Endothelial cell of umbilical vein (primary cell): ENCODE measurements at regions of chr7 and their contacts with region 1.

Region 1: GRCh38 chr7:92621026-92621540 is 30.9 kb upstream of the FAM133B start:
- DNase-seq: peak; percentile 90
- H3K4me3 ChIP-seq: no peak overlapping the region
- H3K27ac ChIP-seq: peak overlapping the region; percentile 75
- H3K4me1 ChIP-seq: peaks cover 23% of the 10 kb centered on the region
- H3K27me3 ChIP-seq: no peaks in the 10 kb centered on the region
- CTCF ChIP-seq: peak; percentile 53 to 64
- POLR2A ChIP-seq: no peak

Region 2: DNA sequence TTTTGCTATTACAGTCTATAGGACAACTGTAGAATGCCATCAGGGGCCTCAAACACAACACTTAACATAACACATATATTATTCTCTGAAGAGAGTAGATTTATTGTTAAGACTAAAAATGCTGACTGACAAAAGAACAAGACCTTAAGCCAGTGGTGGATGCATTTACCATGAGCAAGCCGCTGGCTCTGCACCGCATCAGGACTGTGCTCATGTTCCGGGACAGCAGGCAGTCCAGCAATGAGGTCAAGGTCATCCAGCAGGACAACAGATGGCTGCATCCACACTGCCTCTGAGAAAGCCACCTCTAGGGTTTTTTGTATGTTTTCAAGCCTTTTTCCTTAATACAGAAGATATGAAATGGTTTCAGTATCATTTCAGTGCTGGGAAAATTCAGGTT is 116.5 kb before region 1 on chr7:
- CTCF ChIA-PET with region 1: no interaction called
- POLR2A ChIA-PET with region 1: no interaction called
- dilution Hi-C with region 1: no loop called
- intact Hi-C with region 1: no loop called
- DNase-seq: no peak
- H3K4me3 ChIP-seq: no peak overlapping the region
- H3K27ac ChIP-seq: no peak overlapping the region
- H3K4me1 ChIP-seq: no peaks in the 10 kb centered on the region
- H3K27me3 ChIP-seq: no peaks in the 10 kb centered on the region
- CTCF ChIP-seq: no peak
- POLR2A ChIP-seq: no peak

Region 3: GRCh38 chr7:92609921-92610518 is 11.1 kb before region 1 on chr7:
- CTCF ChIA-PET with region 1: interaction called, 15 read pairs
- POLR2A ChIA-PET with region 1: no interaction called
- dilution Hi-C with region 1: no loop called
- intact Hi-C with region 1: no loop called
- DNase-seq: peak; percentile 47
- H3K4me3 ChIP-seq: no peak overlapping the region
- H3K27ac ChIP-seq: no peak overlapping the region
- H3K4me1 ChIP-seq: no peaks in the 10 kb centered on the region
- H3K27me3 ChIP-seq: no peaks in the 10 kb centered on the region
- CTCF ChIP-seq: peak in 1 of 2 donors; percentile 14
- POLR2A ChIP-seq: no peak

Region 4: DNA sequence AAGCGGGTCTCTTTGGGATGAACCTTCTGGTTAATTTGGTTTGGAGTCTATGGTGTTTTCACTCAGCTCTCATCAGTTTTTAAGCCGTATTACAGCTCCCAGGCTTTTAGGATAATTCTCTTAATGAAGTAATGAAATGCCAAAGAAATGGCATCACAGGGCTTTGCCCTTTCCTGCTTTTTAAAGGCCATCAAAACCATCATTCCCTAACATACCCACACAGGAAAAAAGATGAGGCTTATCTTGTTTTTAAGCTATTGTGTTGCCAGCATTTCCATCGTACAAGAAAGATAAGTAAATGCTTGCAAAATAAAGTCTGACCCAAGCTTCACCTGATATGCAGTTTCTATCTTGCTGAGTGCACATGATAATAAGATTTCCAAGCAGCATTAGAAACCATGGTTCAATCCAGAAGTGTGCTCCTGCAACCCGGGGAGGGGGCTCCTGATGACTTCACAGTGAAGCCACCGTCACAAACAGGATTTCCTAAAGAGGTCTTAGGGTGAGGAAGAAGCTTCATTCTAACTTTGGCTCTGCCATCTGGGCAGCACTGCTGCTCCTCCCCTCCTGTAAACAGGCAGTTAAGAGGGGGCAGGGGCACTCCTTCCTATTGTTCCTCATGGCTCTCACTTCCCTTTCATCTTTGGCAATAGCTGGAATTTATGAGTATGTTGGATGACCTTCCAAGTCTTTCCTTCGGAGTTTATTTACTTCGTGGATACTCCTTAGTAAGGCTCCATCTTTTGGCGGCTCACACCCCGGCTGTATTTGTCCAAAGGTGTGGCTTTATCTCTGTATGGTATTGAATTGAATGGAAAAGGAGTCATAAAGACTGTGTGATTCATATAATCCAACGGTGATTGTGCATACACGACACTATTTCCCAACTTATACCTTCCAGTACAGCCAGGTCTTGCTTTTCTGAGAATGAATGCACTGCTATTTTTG is 24.3 kb after region 1 on chr7:
- CTCF ChIA-PET with region 1: interaction called, 16 read pairs
- POLR2A ChIA-PET with region 1: interaction called, 4 read pairs
- dilution Hi-C with region 1: no loop called
- intact Hi-C with region 1: loop called (anchors 1 kb)
- DNase-seq: peak; percentile 90
- H3K4me3 ChIP-seq: no peak overlapping the region
- H3K27ac ChIP-seq: peak overlapping the region; percentile 53
- H3K4me1 ChIP-seq: peaks cover 35% of the 10 kb centered on the region
- H3K27me3 ChIP-seq: no peaks in the 10 kb centered on the region
- CTCF ChIP-seq: no peak
- POLR2A ChIP-seq: no peak

Region 5: DNA sequence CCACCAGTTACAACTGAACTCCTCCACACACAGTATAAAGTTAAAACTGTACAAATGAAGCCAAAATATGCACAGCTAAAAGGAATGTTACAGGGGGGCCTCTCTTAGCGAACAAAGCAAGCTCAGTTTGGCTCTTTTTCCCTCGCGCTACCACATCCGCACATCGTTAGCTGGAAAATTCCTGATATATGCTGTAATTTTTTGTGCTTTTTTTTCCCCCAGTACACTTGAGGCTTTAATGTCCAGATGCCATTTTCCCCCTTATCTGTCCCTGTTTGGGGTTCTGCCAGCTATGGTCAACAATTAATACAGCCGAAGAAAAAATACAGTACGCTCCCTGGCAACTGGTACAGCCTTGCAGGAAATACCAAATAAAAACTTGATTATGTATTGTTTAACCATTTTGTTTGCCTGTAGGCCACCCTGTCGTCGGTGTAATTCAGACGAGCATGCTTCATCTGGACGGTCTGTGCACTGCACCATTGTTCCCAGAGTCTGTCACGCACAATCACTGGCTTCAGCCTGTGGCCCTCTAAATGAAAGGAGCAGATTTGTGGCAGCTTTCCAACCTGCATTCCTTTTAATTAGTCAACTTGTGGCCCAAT is 77.3 kb after region 1 on chr7:
- CTCF ChIA-PET with region 1: interaction called, 7 read pairs
- POLR2A ChIA-PET with region 1: no interaction called
- dilution Hi-C with region 1: no loop called
- intact Hi-C with region 1: loop called (anchors 1 kb)
- DNase-seq: peak; percentile 95
- H3K4me3 ChIP-seq: peak overlapping the region in 1 of 3 experiments; percentile 1
- H3K27ac ChIP-seq: peak overlapping the region; percentile 75
- H3K4me1 ChIP-seq: peaks cover 44% of the 10 kb centered on the region
- H3K27me3 ChIP-seq: no peaks in the 10 kb centered on the region
- CTCF ChIP-seq: no peak
- POLR2A ChIP-seq: peak; percentile 35

Region 6: GRCh38 chr7:92880212-92881090 is 259.4 kb after region 1 on chr7:
- CTCF ChIA-PET with region 1: no interaction called
- POLR2A ChIA-PET with region 1: no interaction called
- dilution Hi-C with region 1: no loop called
- intact Hi-C with region 1: loop called (anchors 1 kb)
- DNase-seq: peak; percentile 20
- H3K4me3 ChIP-seq: no peak overlapping the region
- H3K27ac ChIP-seq: no peak overlapping the region
- H3K4me1 ChIP-seq: no peaks in the 10 kb centered on the region
- H3K27me3 ChIP-seq: no peaks in the 10 kb centered on the region
- CTCF ChIP-seq: peak in 1 of 2 donors; percentile 16
- POLR2A ChIP-seq: no peak

Region 7: GRCh38 chr7:93231799-93232672 is 611.0 kb after region 1 on chr7 and contains the start of gene VPS50:
- CTCF ChIA-PET with region 1: interaction called, 3 read pairs
- POLR2A ChIA-PET with region 1: no interaction called
- dilution Hi-C with region 1: no loop called
- intact Hi-C with region 1: loop called (anchors 5 kb)
- DNase-seq: peak; percentile 99
- H3K4me3 ChIP-seq: peak within 1 kb of the TSS; percentile 82 to 91 (median 90)
- H3K27ac ChIP-seq: peak within 1 kb of the TSS; percentile 16
- H3K4me1 ChIP-seq: peaks cover 14% of the 10 kb centered on the region
- H3K27me3 ChIP-seq: peaks cover 0 to 8% of the 10 kb centered on the region in 2 experiments
- CTCF ChIP-seq: no peak
- POLR2A ChIP-seq: peak; percentile 35
- total RNA-seq, gene VPS50: 23.9 and 25.6 TPM in 2 replicates